Activated T-helper 1 cell treated with anti-CD3 and anti-CD28 coated beads, Interleukin-12 subunit alpha, Interleukin-12 subunit beta, Interleukin-2, Interleukin-4 antibody, amounts not matched to agents 30 ng/mL and 10 ng/mL and 1 ng/mL, durations not matched to agents 14 hours and 24 hours and 36 hours (primary cell): ENCODE measurements at regions of chr20 and their contacts with region 1.

Region 1: DNA sequence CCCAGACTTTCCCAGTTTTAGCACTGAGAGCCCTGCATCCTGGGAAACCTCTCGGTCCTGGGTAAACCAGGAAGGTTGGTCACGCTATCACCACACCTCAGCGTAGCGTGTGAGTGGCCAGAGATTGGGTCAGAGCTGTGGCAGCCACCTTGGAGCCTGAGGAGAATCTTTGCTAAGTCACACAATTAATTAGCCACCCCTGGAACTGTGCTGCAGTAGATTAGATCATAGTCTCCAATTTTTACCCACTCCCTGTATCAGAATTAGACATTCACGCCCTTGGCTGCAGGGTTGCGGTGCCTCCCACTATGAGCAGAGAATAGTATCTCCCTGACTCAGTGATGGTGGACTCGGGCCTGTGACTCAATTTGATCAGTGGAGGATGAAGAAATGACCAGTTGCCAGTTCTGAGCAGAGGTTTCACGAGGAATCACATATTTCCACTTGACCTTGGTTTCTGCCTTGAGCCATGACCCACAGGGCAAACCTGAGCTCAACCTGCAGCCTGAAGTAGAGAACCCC is 6.0 kb upstream of the PTGIS start:
- DNase-seq: no peak
- H3K4me3 Mint-ChIP-seq: no peak overlapping the region
- H3K27ac Mint-ChIP-seq: peak overlapping the region; percentile 87
- H3K4me1 Mint-ChIP-seq: peaks cover 61% of the 10 kb centered on the region
- H3K27me3 Mint-ChIP-seq: peaks cover 18% of the 10 kb centered on the region

Region 2: DNA sequence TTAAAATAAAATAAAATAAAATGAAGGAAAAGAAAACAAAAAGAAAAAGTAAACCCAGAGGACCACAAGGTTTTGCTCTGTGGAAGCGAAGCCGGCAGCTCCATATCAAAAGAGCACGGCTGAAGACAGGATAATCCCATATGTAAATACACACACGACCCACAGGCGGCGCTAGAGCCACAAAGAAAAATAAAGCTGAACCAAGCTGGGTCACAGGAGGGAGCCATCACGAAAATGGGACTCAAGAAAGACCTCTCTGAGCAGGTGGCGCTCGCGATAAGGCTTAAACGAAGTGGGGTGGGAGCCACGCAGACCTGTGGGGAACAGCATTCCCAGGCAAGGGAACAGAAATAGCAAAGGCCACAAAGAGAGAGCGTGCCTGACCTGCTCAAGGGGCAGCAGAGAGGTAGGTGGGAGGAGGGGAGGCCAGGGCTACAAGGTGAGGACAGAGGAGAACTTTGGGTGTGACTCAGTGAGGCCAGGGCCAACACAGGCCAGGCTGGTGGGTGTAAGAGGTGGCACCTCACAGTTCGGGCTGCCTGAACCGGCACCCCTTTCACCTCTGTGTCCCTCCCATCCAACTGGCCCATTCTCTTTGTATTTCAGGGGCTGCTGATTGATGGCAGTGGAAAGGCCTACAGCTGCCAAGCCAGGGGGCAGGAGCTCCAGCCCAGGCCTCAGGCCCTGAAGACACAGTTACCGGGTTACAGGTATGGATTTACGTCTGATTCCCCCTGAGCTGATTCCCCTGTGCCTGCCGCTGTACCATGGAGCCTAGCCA is 32.0 kb before region 1 on chr20:
- intact Hi-C with region 1: loop called (anchors 2 kb)
- DNase-seq: peak; percentile 60
- H3K4me3 Mint-ChIP-seq: peak overlapping the region; percentile 19
- H3K27ac Mint-ChIP-seq: peak overlapping the region; percentile 97
- H3K4me1 Mint-ChIP-seq: peaks cover 26% of the 10 kb centered on the region
- H3K27me3 Mint-ChIP-seq: peaks cover 5% of the 10 kb centered on the region

Region 3: GRCh38 chr20:49594143-49594930 is 20.4 kb after region 1 on chr20:
- intact Hi-C with region 1: loop called (anchors 2 kb)
- DNase-seq: peak; percentile 76
- H3K4me3 Mint-ChIP-seq: peak overlapping the region; percentile 81
- H3K27ac Mint-ChIP-seq: peak overlapping the region; percentile 99
- H3K4me1 Mint-ChIP-seq: peaks cover 90% of the 10 kb centered on the region
- H3K27me3 Mint-ChIP-seq: no peaks in the 10 kb centered on the region

Region 4: DNA sequence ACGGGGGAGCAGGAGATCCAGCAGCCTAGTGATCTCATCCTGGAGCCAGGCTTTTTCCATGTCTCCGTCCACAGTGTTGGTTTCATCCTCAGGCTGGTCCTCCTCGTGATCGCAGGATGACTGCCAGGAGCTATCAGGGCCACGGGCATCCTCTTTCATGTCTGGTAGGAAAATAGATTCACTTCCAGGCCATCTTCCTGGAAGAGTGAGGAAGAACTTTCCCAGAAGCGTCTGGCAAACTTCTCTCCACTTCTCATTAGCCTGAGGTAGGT is 223.3 kb after region 1 on chr20:
- intact Hi-C with region 1: no loop called
- DNase-seq: no peak
- H3K4me3 Mint-ChIP-seq: no peak overlapping the region
- H3K27ac Mint-ChIP-seq: no peak overlapping the region
- H3K4me1 Mint-ChIP-seq: peaks cover 47% of the 10 kb centered on the region
- H3K27me3 Mint-ChIP-seq: peaks cover 17% of the 10 kb centered on the region